ENCODE measurements at regions of chr21 and their contacts with region 1.

Region 1: GRCh38 chr21:45554477-45555175 is 12.4 kb upstream of the SLC19A1 start:
- DNase-seq: peak; percentile 90 to 94 (median 93)
- ATAC-seq: peak; percentile 70 to 80 (median 76)
- H3K4me3 ChIP-seq: peak overlapping the region; percentile 60 to 66 (median 64)
- H3K27ac ChIP-seq: peak overlapping the region; percentile 74 to 79 (median 76)
- H3K4me1 ChIP-seq: peaks cover 0 to 8% (median 4%) of the 10 kb centered on the region in 4 donors
- H3K27me3 ChIP-seq: no peaks in the 10 kb centered on the region
- CTCF ChIP-seq: peak; percentile 72 to 96 (median 76)
- POLR2A ChIP-seq: peak; percentile 32

Region 2: GRCh38 chr21:45596704-45597318 is 42.2 kb after region 1 on chr21:
- intact Hi-C with region 1: loop called (anchors 5 kb)
- DNase-seq: peak; percentile 80 to 86 (median 83)
- ATAC-seq: peak; percentile 94 to 98 (median 96)
- H3K4me3 ChIP-seq: no peak overlapping the region
- H3K27ac ChIP-seq: no peak overlapping the region
- H3K4me1 ChIP-seq: no peaks in the 10 kb centered on the region
- H3K27me3 ChIP-seq: no peaks in the 10 kb centered on the region
- CTCF ChIP-seq: peak; percentile 89 to 95 (median 92)
- POLR2A ChIP-seq: no peak

Region 3: GRCh38 chr21:45615145-45615711 is 60.6 kb after region 1 on chr21:
- intact Hi-C with region 1: no loop called
- DNase-seq: peak in 2 of 3 donors; percentile 42 to 52
- ATAC-seq: peak in 3 of 4 donors; percentile 21 to 38 (median 38)
- H3K4me3 ChIP-seq: no peak overlapping the region
- H3K27ac ChIP-seq: no peak overlapping the region
- H3K4me1 ChIP-seq: no peaks in the 10 kb centered on the region
- H3K27me3 ChIP-seq: no peaks in the 10 kb centered on the region
- CTCF ChIP-seq: no peak
- POLR2A ChIP-seq: no peak

Region 4: GRCh38 chr21:45820171-45821091 is 265.8 kb after region 1 on chr21:
- intact Hi-C with region 1: loop called (anchors 5 kb)
- DNase-seq: peak; percentile 78 to 83 (median 81)
- ATAC-seq: peak; percentile 79 to 85 (median 82)
- H3K4me3 ChIP-seq: no peak overlapping the region
- H3K27ac ChIP-seq: no peak overlapping the region
- H3K4me1 ChIP-seq: peaks cover 0 to 29% (median 6%) of the 10 kb centered on the region in 4 donors
- H3K27me3 ChIP-seq: no peaks in the 10 kb centered on the region
- CTCF ChIP-seq: peak; percentile 82 to 92 (median 86)
- POLR2A ChIP-seq: no peak

Region 5: GRCh38 chr21:46210378-46211136 is 655.9 kb after region 1 on chr21:
- intact Hi-C with region 1: no loop called
- DNase-seq: peak in 1 of 3 donors; percentile 18
- ATAC-seq: peak in 1 of 4 donors; percentile 26
- H3K4me3 ChIP-seq: no peak overlapping the region
- H3K27ac ChIP-seq: no peak overlapping the region
- H3K4me1 ChIP-seq: no peaks in the 10 kb centered on the region
- H3K27me3 ChIP-seq: no peaks in the 10 kb centered on the region
- CTCF ChIP-seq: no peak
- POLR2A ChIP-seq: no peak

Measured in right lobe of liver (tissue), 6 donors.